Caco-2 (cell line): ENCODE measurements at regions of chr9 and their contacts with region 1.

Region 1: GRCh38 chr9:137034863-137035761 is 3.2 kb upstream of the FUT7 start:
- DNase-seq: peak; percentile 84 to 87
- H3K4me3 ChIP-seq: no peak overlapping the region
- H3K4me3 Mint-ChIP-seq: no peak overlapping the region
- H3K27ac Mint-ChIP-seq: no peak overlapping the region
- H3K4me1 ChIP-seq: peaks cover 6% of the 10 kb centered on the region
- H3K4me1 Mint-ChIP-seq: no peaks in the 10 kb centered on the region
- H3K27me3 ChIP-seq: no peaks in the 10 kb centered on the region
- H3K27me3 Mint-ChIP-seq: no peaks in the 10 kb centered on the region
- CTCF ChIP-seq: peak; percentile 91 to 95

Region 2: DNA sequence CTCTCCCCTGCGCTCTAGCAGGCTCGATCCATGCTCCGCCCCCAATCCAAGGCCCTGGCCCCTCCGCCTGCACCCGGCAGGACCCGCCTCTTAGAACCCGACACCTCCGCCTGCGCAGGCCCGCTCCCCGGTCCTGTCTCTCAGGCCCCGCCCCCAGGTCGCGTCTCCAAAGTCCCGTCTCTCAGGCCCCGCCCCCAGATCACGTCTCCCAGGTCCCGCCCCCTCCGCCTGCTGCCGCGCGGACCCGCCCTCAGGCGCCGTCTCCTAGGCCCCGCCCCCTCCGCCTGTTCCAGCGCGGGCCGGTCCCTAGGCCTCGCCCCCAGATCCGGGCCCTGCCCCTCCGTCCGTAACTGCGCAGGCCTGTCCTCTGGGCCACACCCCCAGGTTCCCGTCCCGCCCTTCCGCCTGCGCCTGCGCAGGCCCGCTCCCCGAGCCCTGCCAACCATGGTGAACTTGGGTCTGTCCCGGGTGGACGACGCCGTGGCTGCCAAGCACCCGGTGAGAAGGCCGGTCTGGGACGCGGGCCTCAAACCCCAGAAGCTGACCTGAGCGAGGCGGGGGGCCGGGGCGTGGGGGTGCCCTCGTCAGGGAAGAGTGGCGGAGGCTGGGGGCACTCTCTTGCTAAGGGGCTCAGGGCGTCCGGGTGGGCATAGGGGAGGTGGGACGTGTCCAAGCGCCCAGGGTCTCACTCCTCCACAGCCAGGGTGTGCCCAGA is 244.0 kb before region 1 on chr9 and contains the start of gene TMEM141:
- CTCF ChIA-PET with region 1: interaction called, 4 read pairs
- POLR2A ChIA-PET with region 1: no interaction called
- intact Hi-C with region 1: loop called (anchors 1 kb)
- DNase-seq: peak; percentile 100
- H3K4me3 ChIP-seq: peak within 1 kb of the TSS; percentile 98
- H3K4me3 Mint-ChIP-seq: peak within 1 kb of the TSS; percentile 68
- H3K27ac Mint-ChIP-seq: peak within 1 kb of the TSS; percentile 84
- H3K4me1 ChIP-seq: peaks cover 47% of the 10 kb centered on the region
- H3K4me1 Mint-ChIP-seq: peaks cover 45% of the 10 kb centered on the region
- H3K27me3 ChIP-seq: no peaks in the 10 kb centered on the region
- H3K27me3 Mint-ChIP-seq: no peaks in the 10 kb centered on the region
- CTCF ChIP-seq: no peak
- total RNA-seq, gene TMEM141: 107 and 122 TPM in 2 replicates

Region 3: DNA sequence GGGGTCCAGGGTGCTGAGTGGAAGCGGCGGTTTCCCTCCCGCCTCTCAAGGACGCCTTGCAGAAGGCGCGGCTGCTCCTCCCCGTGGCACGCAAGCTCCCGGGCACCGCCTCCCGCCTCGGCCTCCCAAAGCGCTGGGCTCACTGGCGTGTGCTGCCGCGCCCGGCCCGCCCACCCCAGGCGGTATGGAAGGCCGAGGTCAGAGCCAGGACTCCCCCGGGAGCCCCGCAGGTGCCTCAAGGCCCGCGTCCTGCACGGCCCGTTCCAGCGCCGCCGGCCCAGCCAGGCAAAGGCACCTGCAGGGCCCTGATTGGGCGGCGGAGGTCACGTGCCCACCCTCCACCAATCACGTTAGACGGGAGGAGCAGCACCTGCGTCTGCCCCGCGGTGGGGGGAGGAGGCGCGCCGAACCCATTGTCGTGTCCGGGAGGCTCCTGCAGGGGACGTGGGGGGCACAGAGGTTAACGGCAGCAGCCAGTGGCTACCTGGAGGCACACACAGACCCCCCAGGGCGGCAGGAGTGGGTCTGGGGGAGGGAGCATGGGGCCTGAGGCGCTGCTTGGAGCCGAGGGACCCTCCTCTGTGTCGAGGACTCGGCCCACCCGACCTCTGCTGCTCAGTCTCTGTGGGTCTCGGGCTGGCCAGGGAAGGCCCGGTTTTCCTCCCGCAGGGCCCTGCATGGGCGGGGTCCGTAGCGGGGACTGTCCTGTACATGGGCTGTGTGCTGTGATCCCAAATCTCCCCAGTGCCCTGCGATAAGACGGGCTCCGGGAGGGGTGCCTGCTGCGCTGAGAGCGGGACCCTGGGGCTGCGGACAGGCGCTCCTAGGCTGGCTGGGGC is 85.1 kb before region 1 on chr9:
- CTCF ChIA-PET with region 1: interaction called, 42 read pairs
- POLR2A ChIA-PET with region 1: no interaction called
- intact Hi-C with region 1: no loop called
- DNase-seq: peak; percentile 99
- H3K4me3 ChIP-seq: peak overlapping the region; percentile 60
- H3K4me3 Mint-ChIP-seq: peak overlapping the region; percentile 76
- H3K27ac Mint-ChIP-seq: peak overlapping the region; percentile 94
- H3K4me1 ChIP-seq: peaks cover 41% of the 10 kb centered on the region
- H3K4me1 Mint-ChIP-seq: no peaks in the 10 kb centered on the region
- H3K27me3 ChIP-seq: no peaks in the 10 kb centered on the region
- H3K27me3 Mint-ChIP-seq: no peaks in the 10 kb centered on the region
- CTCF ChIP-seq: peak; percentile 15 to 41

Region 4: GRCh38 chr9:137046098-137046787 is 11.1 kb after region 1 on chr9 and contains the start of gene NPDC1:
- CTCF ChIA-PET with region 1: interaction called, 17 read pairs
- POLR2A ChIA-PET with region 1: no interaction called
- intact Hi-C with region 1: no loop called
- DNase-seq: peak; percentile 89 to 95
- H3K4me3 ChIP-seq: peak within 1 kb of the TSS; percentile 63
- H3K4me3 Mint-ChIP-seq: peak within 1 kb of the TSS; percentile 79
- H3K27ac Mint-ChIP-seq: no peak within 1 kb of the TSS
- H3K4me1 ChIP-seq: 0 out of 2 replicates have a peak, but pooled peaks cover 5% of the 10 kb centered on the region
- H3K4me1 Mint-ChIP-seq: no peaks in the 10 kb centered on the region
- H3K27me3 ChIP-seq: no peaks in the 10 kb centered on the region
- H3K27me3 Mint-ChIP-seq: no peaks in the 10 kb centered on the region
- CTCF ChIP-seq: peak; percentile 85 to 97
- total RNA-seq, gene NPDC1: 44.1 and 49.2 TPM in 2 replicates

Region 5: DNA sequence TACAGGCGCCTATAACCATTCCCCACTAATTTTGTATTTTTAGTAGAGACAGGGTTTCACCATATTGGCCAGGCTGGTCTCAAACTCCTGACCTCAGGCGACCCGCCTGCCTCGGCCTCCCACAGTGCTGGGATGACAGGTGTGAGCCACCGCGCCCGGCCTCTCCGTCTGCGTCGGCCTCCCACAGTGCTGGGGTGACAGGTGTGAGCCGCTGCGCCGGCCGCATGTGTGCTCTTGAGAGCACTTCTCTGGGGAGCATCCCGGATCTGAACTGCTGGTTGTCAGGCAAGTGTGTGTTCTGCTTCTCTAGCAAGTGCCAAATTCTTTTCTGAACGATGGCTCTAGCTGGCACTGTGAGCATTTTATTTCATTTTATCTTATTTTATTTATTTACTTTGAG is 22.4 kb after region 1 on chr9:
- CTCF ChIA-PET with region 1: no interaction called
- POLR2A ChIA-PET with region 1: no interaction called
- intact Hi-C with region 1: no loop called
- DNase-seq: no peak
- H3K4me3 ChIP-seq: no peak overlapping the region
- H3K4me3 Mint-ChIP-seq: no peak overlapping the region
- H3K27ac Mint-ChIP-seq: no peak overlapping the region
- H3K4me1 ChIP-seq: peaks cover 18% of the 10 kb centered on the region
- H3K4me1 Mint-ChIP-seq: peaks cover 6% of the 10 kb centered on the region
- H3K27me3 ChIP-seq: no peaks in the 10 kb centered on the region
- H3K27me3 Mint-ChIP-seq: no peaks in the 10 kb centered on the region
- CTCF ChIP-seq: no peak

Region 6: DNA sequence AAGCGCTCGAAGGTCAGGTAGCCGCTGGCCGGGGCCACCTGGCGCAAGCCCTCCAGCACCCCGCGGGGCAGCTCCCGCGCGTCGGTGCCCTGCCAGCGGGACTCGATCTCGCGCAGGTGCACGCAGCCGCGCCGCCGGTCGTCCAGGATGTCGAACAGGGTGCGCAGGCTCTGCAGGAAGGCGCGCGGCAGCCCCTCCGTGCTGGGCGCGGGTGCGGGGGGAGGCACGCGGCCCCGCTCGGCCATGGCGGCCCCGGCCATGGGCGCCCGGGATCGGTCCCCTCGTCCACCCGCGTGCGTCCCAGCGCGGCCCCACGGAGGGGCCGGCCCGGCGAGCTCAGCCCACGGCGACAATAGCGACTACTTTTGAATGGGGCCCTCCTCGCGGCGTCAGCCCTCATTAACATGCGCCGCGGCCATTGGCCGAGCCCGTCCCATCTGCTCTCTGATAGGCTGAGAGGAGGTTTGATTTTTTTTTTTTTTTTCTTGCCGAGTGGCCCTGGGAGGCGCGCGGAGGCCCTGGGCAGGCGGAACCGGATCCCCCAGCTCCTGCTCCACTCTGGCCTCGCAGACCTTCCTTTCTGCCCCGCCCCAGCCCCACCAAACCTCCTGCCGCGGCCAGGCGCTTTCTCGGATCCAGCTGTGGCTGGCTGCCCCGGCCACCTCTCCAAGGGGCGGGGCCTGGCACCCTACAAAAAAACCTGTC is 35.2 kb after region 1 on chr9 and contains the start of gene SAPCD2:
- CTCF ChIA-PET with region 1: interaction called, 42 read pairs
- POLR2A ChIA-PET with region 1: no interaction called
- intact Hi-C with region 1: no loop called
- DNase-seq: peak; percentile 95
- H3K4me3 ChIP-seq: peak within 1 kb of the TSS; percentile 80
- H3K4me3 Mint-ChIP-seq: peak within 1 kb of the TSS; percentile 68
- H3K27ac Mint-ChIP-seq: peak within 1 kb of the TSS; percentile 85
- H3K4me1 ChIP-seq: peaks cover 33% of the 10 kb centered on the region
- H3K4me1 Mint-ChIP-seq: peaks cover 18% of the 10 kb centered on the region
- H3K27me3 ChIP-seq: no peaks in the 10 kb centered on the region
- H3K27me3 Mint-ChIP-seq: no peaks in the 10 kb centered on the region
- CTCF ChIP-seq: no peak
- total RNA-seq, gene SAPCD2: 53.3 and 57.5 TPM in 2 replicates